Left ventricle myocardium inferior (tissue), 1 donor: ENCODE measurements at regions of chr12 and their contacts with region 1.

Region 1: DNA sequence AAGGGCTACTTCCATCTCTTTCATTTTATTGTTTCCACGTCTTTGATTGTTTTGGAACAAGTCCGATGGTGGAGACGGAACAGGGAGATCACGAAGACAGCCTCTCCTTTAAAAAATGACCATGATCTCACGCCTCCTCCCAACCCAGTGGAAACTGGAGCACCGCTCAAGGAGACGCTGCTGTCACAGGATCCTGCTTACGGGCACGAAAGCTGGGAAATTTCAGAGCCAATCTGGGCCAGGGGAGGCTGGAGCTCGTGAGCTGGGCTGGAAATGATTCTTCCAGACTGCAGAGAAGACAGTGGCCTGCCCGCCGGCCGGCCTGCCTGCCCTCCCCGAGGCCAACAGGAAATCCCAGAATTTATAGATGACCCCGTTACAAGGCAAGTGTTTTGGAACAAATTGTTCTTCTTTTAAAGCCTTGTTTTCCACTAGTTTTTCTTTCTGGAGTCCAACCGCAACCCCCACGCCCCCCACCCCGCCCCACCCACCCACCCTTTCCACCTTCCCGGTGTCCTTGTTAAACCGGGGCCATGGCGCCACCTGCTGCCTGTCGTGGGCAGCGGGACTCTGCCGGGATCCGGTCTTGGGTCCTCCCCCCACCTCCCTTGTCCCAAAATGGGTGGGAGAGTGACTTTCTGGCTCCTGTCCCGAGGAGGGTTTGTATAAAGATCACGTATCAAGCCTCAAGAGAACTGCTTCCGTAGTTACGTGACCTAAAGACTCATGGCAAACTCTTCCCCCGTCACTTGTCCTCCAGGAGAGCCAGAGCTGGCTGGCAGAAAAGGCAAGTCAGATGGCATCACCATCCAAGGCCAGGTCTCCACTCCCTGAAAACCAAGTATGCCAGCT is 40.3 kb downstream of the MAP1LC3B2 start:
- DNase-seq: peak; percentile 86
- H3K4me3 ChIP-seq: peak overlapping the region; percentile 55
- H3K27ac ChIP-seq: peak overlapping the region; percentile 79
- H3K4me1 ChIP-seq: peaks cover 46% of the 10 kb centered on the region
- H3K27me3 ChIP-seq: peaks cover 4% of the 10 kb centered on the region
- CTCF ChIP-seq: peak; percentile 76

Region 2: GRCh38 chr12:116277393-116278278 is 321.9 kb before region 1 on chr12 and contains the start of gene MED13L:
- intact Hi-C with region 1: loop called (anchors 10 kb)
- DNase-seq: peak; percentile 90
- H3K4me3 ChIP-seq: peak within 1 kb of the TSS; percentile 87
- H3K27ac ChIP-seq: peak within 1 kb of the TSS; percentile 99
- H3K4me1 ChIP-seq: peaks cover 53% of the 10 kb centered on the region
- H3K27me3 ChIP-seq: no peaks in the 10 kb centered on the region
- CTCF ChIP-seq: peak; percentile 67
- total RNA-seq, gene MED13L: 55.0 TPM

Region 3: GRCh38 chr12:116525418-116526001 is 74.0 kb before region 1 on chr12:
- intact Hi-C with region 1: loop called (anchors 5 kb)
- DNase-seq: peak; percentile 48
- H3K4me3 ChIP-seq: no peak overlapping the region
- H3K27ac ChIP-seq: peak overlapping the region; percentile 62
- H3K4me1 ChIP-seq: peaks cover 13% of the 10 kb centered on the region
- H3K27me3 ChIP-seq: peaks cover 92% of the 10 kb centered on the region
- CTCF ChIP-seq: no peak